ENCODE measurements at regions of chr15 and their contacts with region 1.

Region 1: GRCh38 chr15:59410391-59410896 is 27.5 kb upstream of the FAM81A start:
- DNase-seq: peak; percentile 64
- ATAC-seq: peak; percentile 4
- H3K4me3 ChIP-seq: peak overlapping the region; percentile 38
- H3K27ac ChIP-seq: peak overlapping the region; percentile 52
- H3K4me1 ChIP-seq: peaks cover 66% of the 10 kb centered on the region
- H3K27me3 ChIP-seq: no peaks in the 10 kb centered on the region
- CTCF ChIP-seq: no peak
- EP300 ChIP-seq: no peak
- POLR2A ChIP-seq: no peak
- RAD21 ChIP-seq: no peak

Region 2: DNA sequence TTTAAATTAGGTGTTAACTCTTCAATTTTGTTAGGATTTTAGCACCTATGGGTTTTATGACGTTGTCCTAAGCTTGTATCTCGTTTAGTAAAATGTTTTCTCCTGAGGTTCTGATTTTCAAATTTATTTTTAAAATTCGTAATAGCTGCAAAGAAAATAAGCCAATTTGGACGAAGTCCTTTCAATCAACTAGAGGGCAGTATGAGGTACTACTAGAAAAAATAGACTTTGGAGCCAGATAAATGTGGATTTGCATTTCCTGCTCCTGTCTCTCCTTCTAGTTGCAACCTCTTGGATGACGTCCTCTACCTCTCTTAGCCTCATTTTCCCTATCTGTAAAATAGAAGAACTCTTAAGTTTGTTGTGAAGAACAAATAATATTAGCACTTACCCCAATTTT is 558.1 kb before region 1 on chr15:
- CTCF ChIA-PET with region 1: no interaction called
- POLR2A ChIA-PET with region 1: no interaction called
- RAD21 ChIA-PET with region 1: no interaction called
- SMC1A ChIA-PET with region 1: no interaction called
- in situ Hi-C with region 1: no loop called
- intact Hi-C with region 1: no loop called
- DNase-seq: no peak
- ATAC-seq: no peak
- H3K4me3 ChIP-seq: no peak overlapping the region
- H3K27ac ChIP-seq: no peak overlapping the region
- H3K4me1 ChIP-seq: no peaks in the 10 kb centered on the region
- H3K27me3 ChIP-seq: no peaks in the 10 kb centered on the region
- CTCF ChIP-seq: no peak
- EP300 ChIP-seq: no peak
- POLR2A ChIP-seq: no peak
- RAD21 ChIP-seq: no peak

Region 3: GRCh38 chr15:59174835-59175831 is 235.3 kb before region 1 on chr15:
- CTCF ChIA-PET with region 1: interaction called, 19 read pairs
- POLR2A ChIA-PET with region 1: no interaction called
- RAD21 ChIA-PET with region 1: interaction called, 14 read pairs
- SMC1A ChIA-PET with region 1: interaction called, 6 read pairs
- in situ Hi-C with region 1: no loop called
- intact Hi-C with region 1: no loop called
- DNase-seq: no peak
- ATAC-seq: peak; percentile 78
- H3K4me3 ChIP-seq: no peak overlapping the region
- H3K27ac ChIP-seq: no peak overlapping the region
- H3K4me1 ChIP-seq: no peaks in the 10 kb centered on the region; the same call in 1 of the 2 replicates
- H3K27me3 ChIP-seq: no peaks in the 10 kb centered on the region
- CTCF ChIP-seq: peak; percentile 28 to 36 (median 31); a peak in 3 of 6 replicates
- EP300 ChIP-seq: no peak
- POLR2A ChIP-seq: no peak
- RAD21 ChIP-seq: 0 out of 2 replicates have a peak, but pooled peaks have one; percentile 12

Region 4: DNA sequence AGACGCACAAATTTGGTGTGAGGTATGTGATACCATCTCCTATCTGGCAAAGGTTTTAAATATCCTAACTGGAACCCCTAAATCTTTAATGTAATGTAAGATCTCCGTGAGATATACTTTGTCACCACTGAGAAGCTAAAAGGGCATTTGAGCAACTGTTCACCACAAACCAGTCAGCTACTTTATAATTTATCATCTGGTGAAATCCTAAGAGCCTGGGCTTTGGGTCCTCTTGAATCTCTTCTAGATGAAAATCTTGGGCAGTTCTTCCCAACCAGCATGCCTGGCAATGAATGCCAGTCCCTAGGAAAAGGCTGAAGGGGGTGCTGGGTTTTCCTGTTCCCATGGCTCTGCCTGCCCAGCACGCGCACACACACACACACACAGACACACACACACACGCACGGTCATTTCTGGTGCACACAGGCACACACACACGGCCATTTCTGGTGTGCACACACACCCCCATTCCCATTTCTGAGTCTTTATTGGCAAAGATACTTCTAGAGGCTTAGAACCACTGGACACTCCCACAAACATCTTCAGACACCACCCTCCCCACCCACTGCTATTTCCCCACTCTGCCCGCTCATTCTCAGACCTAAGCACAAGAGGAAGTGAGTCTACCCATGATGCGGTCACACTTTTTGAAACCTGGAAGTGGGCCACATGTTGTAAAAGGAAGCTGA is 110.4 kb before region 1 on chr15:
- CTCF ChIA-PET with region 1: interaction called, 14 read pairs
- POLR2A ChIA-PET with region 1: interaction called, 9 read pairs
- RAD21 ChIA-PET with region 1: interaction called, 61 read pairs
- SMC1A ChIA-PET with region 1: interaction called, 43 read pairs
- in situ Hi-C with region 1: no loop called
- intact Hi-C with region 1: loop called (anchors 2 kb)
- DNase-seq: peak; percentile 97
- ATAC-seq: peak; percentile 77
- H3K4me3 ChIP-seq: peak overlapping the region; percentile 8; the same call in 1 of the 2 replicates
- H3K27ac ChIP-seq: peak overlapping the region; percentile 96
- H3K4me1 ChIP-seq: peaks cover 82% of the 10 kb centered on the region
- H3K27me3 ChIP-seq: no peaks in the 10 kb centered on the region
- CTCF ChIP-seq: no peak
- EP300 ChIP-seq: peak; percentile 62 to 87; a peak in 3 of 4 replicates
- POLR2A ChIP-seq: no peak
- RAD21 ChIP-seq: 0 out of 2 replicates have a peak, but pooled peaks have one; percentile 16

Region 5: DNA sequence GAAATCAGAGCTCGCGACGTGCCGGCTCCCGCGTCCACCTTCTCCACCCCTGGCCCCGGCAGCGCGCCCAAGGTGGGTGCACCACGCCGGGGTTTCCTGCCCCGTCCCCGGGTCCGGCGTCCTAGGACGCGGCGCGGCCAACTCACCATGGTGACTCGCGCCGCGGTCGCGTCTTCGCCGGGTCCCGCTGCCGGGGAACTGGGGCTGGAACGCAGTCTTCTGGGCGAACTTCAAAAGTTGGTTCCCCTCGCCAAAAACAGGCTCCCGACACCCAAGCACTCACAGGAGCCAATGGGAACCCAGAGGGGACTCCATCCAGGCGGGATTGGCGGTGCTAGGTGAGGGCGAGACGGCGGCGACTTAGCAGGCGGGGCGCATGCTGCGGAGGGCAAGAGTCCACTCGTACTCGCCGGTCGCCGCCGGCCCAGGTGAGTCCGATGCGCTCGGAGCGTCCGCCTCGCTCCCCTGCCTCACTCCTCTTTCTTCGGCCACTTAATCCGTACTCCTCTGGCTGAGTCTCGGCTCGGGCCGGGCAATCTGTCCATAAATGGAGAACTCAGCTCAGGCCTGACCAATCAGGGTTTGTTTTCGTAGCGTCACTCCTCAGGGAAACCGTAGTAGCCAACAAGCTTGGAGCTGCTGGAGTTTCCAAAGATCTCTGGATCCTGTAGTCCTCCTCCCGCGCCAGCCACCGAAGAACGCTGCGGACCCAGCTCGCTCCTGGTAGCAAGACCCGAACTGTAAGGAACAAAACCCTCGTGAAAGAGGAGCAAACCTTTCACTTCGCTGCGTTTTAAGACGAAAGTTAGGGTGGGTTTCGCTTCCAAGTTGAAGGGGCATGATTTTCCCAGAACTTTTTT is 37.9 kb before region 1 on chr15 and contains the start of gene MYO1E:
- CTCF ChIA-PET with region 1: interaction called, 49 read pairs
- POLR2A ChIA-PET with region 1: interaction called, 4 read pairs
- RAD21 ChIA-PET with region 1: interaction called, 65 read pairs
- SMC1A ChIA-PET with region 1: interaction called, 56 read pairs
- in situ Hi-C with region 1: no loop called
- intact Hi-C with region 1: loop called (anchors 2 kb)
- DNase-seq: peak; percentile 72
- ATAC-seq: peak; percentile 76
- H3K4me3 ChIP-seq: peak within 1 kb of the TSS; percentile 75
- H3K27ac ChIP-seq: peak within 1 kb of the TSS; percentile 95
- H3K4me1 ChIP-seq: peaks cover 3% of the 10 kb centered on the region
- H3K27me3 ChIP-seq: no peaks in the 10 kb centered on the region
- CTCF ChIP-seq: no peak
- EP300 ChIP-seq: no peak
- POLR2A ChIP-seq: peak; percentile 88
- RAD21 ChIP-seq: no peak
- polyA plus RNA-seq, gene MYO1E: 10.3 to 27.5 TPM

Region 6: GRCh38 chr15:59437817-59438562 is 27.5 kb after region 1 on chr15 and contains the start of gene FAM81A:
- CTCF ChIA-PET with region 1: no interaction called
- POLR2A ChIA-PET with region 1: no interaction called
- RAD21 ChIA-PET with region 1: interaction called, 5 read pairs
- SMC1A ChIA-PET with region 1: interaction called, 3 read pairs
- in situ Hi-C with region 1: no loop called
- intact Hi-C with region 1: loop called (anchors 2 kb)
- DNase-seq: no peak
- ATAC-seq: peak; percentile 81
- H3K4me3 ChIP-seq: peak within 1 kb of the TSS; percentile 69
- H3K27ac ChIP-seq: peak within 1 kb of the TSS; percentile 29; the same call in 1 of the 2 replicates
- H3K4me1 ChIP-seq: peaks cover 21% of the 10 kb centered on the region
- H3K27me3 ChIP-seq: peaks cover 0 to 3% of the 10 kb centered on the region in 2 experiments; a peak in 1 of 4 replicates
- CTCF ChIP-seq: no peak
- EP300 ChIP-seq: no peak
- POLR2A ChIP-seq: peak; percentile 53
- RAD21 ChIP-seq: no peak
- polyA plus RNA-seq, gene FAM81A: 7.6 to 9.0 TPM

Region 7: GRCh38 chr15:59501597-59501996 is 91.2 kb after region 1 on chr15:
- CTCF ChIA-PET with region 1: interaction called, 10 read pairs
- POLR2A ChIA-PET with region 1: no interaction called
- RAD21 ChIA-PET with region 1: interaction called, 4 read pairs
- SMC1A ChIA-PET with region 1: interaction called, 4 read pairs
- in situ Hi-C with region 1: no loop called
- intact Hi-C with region 1: no loop called
- DNase-seq: no peak
- ATAC-seq: peak; percentile 89
- H3K4me3 ChIP-seq: no peak overlapping the region
- H3K27ac ChIP-seq: no peak overlapping the region
- H3K4me1 ChIP-seq: no peaks in the 10 kb centered on the region
- H3K27me3 ChIP-seq: no peaks in the 10 kb centered on the region
- CTCF ChIP-seq: peak; percentile 80 to 84 (median 81)
- EP300 ChIP-seq: no peak
- POLR2A ChIP-seq: no peak
- RAD21 ChIP-seq: peak; percentile 91

Region 8: DNA sequence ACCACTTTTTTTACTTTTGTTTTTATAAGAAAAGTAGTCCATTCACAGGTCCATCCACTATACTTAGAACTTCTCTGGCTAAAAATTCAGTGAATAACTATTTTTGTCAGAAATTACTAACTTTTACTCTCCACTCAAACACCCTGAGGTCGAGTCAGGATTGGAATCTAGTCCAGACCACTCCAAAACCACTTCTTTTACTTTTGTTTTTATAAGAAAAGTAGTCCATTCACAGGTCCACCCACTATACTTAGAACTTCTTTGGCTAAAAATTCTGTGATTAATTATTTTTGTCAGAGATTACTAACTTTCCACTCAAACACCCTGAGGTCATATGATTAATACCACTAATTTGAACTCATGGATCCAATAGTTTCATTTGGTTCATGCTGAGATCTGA is 1579.3 kb after region 1 on chr15:
- CTCF ChIA-PET with region 1: no interaction called
- POLR2A ChIA-PET with region 1: no interaction called
- RAD21 ChIA-PET with region 1: no interaction called
- SMC1A ChIA-PET with region 1: no interaction called
- in situ Hi-C with region 1: no loop called
- intact Hi-C with region 1: no loop called
- DNase-seq: no peak
- ATAC-seq: no peak
- H3K4me3 ChIP-seq: no peak overlapping the region
- H3K27ac ChIP-seq: no peak overlapping the region
- H3K4me1 ChIP-seq: no peaks in the 10 kb centered on the region
- H3K27me3 ChIP-seq: peaks cover 0 to 2% of the 10 kb centered on the region in 2 experiments; a peak in 1 of 4 replicates
- CTCF ChIP-seq: no peak
- EP300 ChIP-seq: no peak
- POLR2A ChIP-seq: no peak
- RAD21 ChIP-seq: no peak

Measured in GM12878 (cell line).